ENCODE measurements at regions of chr10 and their contacts with region 1.

Region 1: GRCh38 chr10:72273410-72274212 is at the start of gene DDIT4:
- DNase-seq: peak; percentile 96
- H3K4me3 ChIP-seq: peak within 1 kb of the TSS; percentile 99
- CTCF ChIP-seq: no peak

Region 2: GRCh38 chr10:71963756-71964668 is 309.6 kb before region 1 on chr10 and contains the start of gene CHST3:
- CTCF ChIA-PET with region 1: no interaction called
- POLR2A ChIA-PET with region 1: no interaction called
- DNase-seq: no peak
- H3K4me3 ChIP-seq: peak within 1 kb of the TSS; percentile 93
- CTCF ChIP-seq: no peak

Region 3: DNA sequence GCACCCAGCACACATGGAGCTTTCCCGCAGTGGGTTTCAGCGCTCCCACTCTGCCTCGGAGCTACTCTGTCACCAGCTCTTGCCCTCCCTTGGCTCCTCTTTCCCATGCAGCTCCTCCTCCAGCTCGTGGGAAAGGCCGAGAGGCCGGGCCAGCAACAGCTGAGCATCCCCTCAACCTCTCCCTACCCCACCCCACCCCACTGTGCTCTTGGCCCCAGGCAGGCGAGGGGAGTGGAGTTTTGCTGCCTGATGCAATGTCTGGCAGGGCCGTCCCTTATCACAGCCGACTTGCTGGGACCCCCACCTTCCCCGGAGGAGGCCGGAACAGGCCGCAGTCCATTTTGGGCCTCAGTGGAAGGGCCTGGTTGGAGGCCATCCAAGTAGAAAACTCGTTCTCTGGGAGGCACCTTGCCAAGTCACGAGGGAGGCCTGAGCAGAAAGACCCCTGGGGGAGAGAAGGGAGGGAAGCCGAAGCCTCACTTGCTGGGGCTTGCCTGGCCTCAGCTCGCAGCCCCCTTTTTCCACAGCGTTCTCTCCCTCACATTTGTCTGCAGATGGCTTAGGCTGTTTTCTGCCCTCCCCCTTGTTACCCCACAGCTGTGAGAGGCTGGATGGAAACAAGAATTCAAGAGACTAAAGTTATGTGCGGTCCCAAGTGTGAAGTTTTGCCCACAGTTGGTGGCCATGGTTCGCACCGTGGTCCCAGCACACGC is 274.1 kb before region 1 on chr10:
- CTCF ChIA-PET with region 1: no interaction called
- POLR2A ChIA-PET with region 1: no interaction called
- DNase-seq: no peak
- H3K4me3 ChIP-seq: no peak overlapping the region
- CTCF ChIP-seq: no peak

Region 4: GRCh38 chr10:72260588-72261322 is 12.9 kb before region 1 on chr10:
- CTCF ChIA-PET with region 1: interaction called, 6 read pairs
- POLR2A ChIA-PET with region 1: interaction called, 89 read pairs
- DNase-seq: no peak
- H3K4me3 ChIP-seq: peak overlapping the region; percentile 52
- CTCF ChIP-seq: peak; percentile 19

Region 5: GRCh38 chr10:72297968-72298773 is 24.6 kb after region 1 on chr10:
- CTCF ChIA-PET with region 1: interaction called, 25 read pairs
- POLR2A ChIA-PET with region 1: interaction called, 44 read pairs
- DNase-seq: peak; percentile 87
- H3K4me3 ChIP-seq: peak overlapping the region; percentile 64
- CTCF ChIP-seq: no peak

Region 6: DNA sequence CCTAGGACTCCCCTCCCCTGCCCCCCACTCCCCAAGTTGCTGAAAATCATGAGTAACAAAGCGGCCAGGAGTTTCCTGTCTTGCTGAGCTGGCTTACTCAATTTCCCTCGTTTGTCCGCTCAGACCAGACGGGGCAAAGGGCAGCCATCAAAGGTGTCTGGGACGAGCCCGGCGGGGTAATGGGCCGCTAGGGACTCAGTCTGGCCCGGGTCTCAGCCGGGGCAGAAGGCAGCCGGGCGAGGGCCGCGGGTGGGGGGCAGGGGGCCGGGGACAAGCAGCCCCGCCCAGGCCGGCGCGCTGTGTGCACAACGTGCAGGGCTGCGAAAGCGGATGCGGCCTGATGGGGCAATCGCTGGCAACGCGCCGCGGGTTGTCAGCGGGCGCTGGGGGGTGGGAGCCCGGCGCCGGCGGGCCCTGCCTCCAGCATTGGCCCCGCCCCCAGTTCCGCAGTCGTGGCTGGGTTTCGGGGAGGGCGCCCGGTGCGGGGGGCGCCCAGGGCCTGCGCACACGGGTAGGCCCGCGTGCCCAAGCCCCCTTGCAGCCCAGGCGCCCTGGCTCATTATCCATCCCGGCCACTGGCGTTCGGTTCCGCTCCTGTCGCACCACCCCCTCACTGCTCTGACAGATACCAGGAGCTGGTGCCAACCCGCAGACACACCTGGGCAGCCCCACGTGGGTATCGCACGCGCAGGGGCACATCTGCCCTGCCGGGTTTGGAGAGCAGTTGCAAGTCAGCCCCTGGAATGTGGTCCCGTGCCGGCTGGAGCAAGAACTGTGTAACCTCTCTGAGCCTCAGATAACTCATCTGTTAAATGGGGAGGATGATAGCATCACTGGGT is 46.0 kb after region 1 on chr10:
- CTCF ChIA-PET with region 1: interaction called, 20 read pairs
- POLR2A ChIA-PET with region 1: interaction called, 106 read pairs
- DNase-seq: no peak
- H3K4me3 ChIP-seq: peak overlapping the region; percentile 47
- CTCF ChIP-seq: no peak

Region 7: DNA sequence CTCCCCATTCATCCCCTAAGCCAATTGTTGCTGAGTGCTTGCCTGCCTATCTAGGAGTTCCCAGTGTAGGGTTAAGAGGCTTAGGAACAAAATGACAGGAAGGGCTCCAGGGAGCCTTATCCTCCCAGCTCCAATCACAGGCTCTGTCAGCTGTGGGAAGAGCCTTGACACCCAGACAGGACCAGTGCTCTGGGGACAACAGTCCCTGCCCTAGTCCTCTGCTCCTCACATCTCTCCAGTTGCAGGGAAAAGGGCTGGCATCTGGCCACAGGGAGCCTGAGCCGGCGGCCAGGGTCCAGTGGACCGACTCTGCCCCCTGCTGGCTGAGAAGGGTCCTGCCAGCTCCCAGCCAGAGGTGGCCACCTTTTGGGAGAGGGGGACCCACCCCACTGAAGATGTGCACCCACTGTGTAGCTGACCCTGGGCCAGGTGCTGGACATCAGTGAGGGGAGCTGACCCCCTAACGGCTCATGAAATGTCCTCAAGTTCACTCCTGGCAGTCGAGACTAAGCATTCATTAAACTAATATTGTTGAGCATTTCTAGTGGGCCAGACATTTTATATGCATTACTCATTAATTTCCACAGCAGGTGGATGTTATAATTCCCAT is 63.5 kb after region 1 on chr10:
- CTCF ChIA-PET with region 1: interaction called, 32 read pairs
- POLR2A ChIA-PET with region 1: interaction called, 11 read pairs
- DNase-seq: no peak
- H3K4me3 ChIP-seq: no peak overlapping the region
- CTCF ChIP-seq: peak; percentile 94

Region 8: GRCh38 chr10:72449915-72450441 is 176.4 kb after region 1 on chr10:
- CTCF ChIA-PET with region 1: no interaction called
- POLR2A ChIA-PET with region 1: no interaction called
- DNase-seq: no peak
- H3K4me3 ChIP-seq: no peak overlapping the region
- CTCF ChIP-seq: no peak

Region 9: DNA sequence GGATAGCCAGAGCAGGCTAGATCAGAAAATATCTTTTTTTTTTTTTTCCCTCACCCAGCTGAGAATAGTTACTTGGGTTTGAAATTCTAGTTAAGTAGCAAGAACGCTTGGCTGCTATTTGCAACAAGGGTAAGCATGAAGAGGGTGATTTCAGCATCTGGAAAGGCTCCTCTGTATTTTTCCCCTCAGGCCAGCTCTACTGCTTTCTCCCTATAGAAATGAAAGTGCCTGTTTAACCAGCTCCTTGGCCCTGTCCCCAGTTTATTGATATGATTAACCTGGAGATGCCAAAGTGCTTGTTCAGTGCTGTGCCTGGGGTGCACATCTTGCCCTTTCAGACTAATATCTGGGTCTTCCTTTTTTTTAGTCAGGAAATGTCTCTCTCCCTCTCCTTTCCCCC is 1839.9 kb after region 1 on chr10:
- CTCF ChIA-PET with region 1: no interaction called
- POLR2A ChIA-PET with region 1: no interaction called
- DNase-seq: no peak
- H3K4me3 ChIP-seq: no peak overlapping the region
- CTCF ChIP-seq: no peak

Measured in AG04449 (cell line).